Endothelial cell of umbilical vein (primary cell): ENCODE measurements at regions of chr14 and their contacts with region 1.

Region 1: GRCh38 chr14:22002860-22003309 is 329.3 kb upstream of the OR4E1 start:
- DNase-seq: no peak
- H3K4me3 ChIP-seq: no peak overlapping the region
- H3K27ac ChIP-seq: no peak overlapping the region
- H3K4me1 ChIP-seq: no peaks in the 10 kb centered on the region
- H3K27me3 ChIP-seq: no peaks in the 10 kb centered on the region
- CTCF ChIP-seq: peak; percentile 45 to 48
- POLR2A ChIP-seq: no peak

Region 2: GRCh38 chr14:21987937-21988336 is 14.9 kb before region 1 on chr14:
- CTCF ChIA-PET with region 1: interaction called, 52 read pairs
- POLR2A ChIA-PET with region 1: no interaction called
- dilution Hi-C with region 1: no loop called
- intact Hi-C with region 1: no loop called
- DNase-seq: peak; percentile 39
- H3K4me3 ChIP-seq: no peak overlapping the region
- H3K27ac ChIP-seq: no peak overlapping the region
- H3K4me1 ChIP-seq: no peaks in the 10 kb centered on the region
- H3K27me3 ChIP-seq: peaks cover 5 to 14% of the 10 kb centered on the region in 2 experiments
- CTCF ChIP-seq: peak; percentile 60 to 69
- POLR2A ChIP-seq: no peak